ENCODE measurements at regions of chr19 and their contacts with region 1.

Region 1: GRCh38 chr19:49877020-49877878 is at the starts of genes AKT1S1 and TBC1D17:
- DNase-seq: peak; percentile 99
- H3K4me3 ChIP-seq: peak within 1 kb of the TSS; percentile 79
- H3K27ac ChIP-seq: peak within 1 kb of the TSS; percentile 92
- H3K4me1 ChIP-seq: peaks cover 21% of the 10 kb centered on the region
- H3K27me3 ChIP-seq: no peaks in the 10 kb centered on the region
- CTCF ChIP-seq: no peak
- total RNA-seq, gene AKT1S1: 109 and 143 TPM in 2 replicates
- total RNA-seq, gene TBC1D17: 52.1 and 62.3 TPM in 2 replicates

Region 2: DNA sequence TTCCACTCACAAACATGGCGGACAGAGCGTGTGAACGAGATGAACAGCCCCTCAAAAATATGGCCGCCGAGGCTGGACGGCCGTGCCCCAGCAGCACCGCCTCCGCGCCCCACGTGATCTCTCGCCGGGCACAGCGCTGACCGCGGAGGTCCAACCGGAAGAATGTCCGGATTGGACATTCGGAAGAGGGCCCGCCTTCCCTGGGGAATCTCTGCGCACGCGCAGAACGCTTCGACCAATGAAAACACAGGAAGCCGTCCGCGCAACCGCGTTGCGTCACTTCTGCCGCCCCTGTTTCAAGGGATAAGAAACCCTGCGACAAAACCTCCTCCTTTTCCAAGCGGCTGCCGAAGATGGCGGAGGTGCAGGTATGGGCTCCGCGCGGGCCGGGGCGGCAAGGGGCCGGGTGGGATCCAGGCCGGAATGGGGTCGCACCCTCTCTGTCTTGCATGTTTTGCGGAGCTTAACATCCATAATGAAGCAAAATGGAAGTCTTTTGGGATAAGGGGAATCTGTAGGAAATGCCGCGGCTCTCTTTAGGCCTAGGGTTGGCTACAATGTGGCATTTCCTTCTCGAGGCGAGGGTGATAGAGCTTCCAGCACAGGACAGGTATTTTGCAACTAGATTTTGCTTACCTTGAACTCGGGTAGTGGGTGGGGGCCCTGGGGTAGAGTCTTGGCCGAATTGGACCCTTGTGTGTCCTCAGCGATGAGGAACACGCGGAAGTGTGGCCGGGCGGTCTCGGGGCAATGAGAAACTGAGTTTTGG is 389.8 kb before region 1 on chr19 and contains the start of gene RPL13A:
- CTCF ChIA-PET with region 1: no interaction called
- POLR2A ChIA-PET with region 1: no interaction called
- intact Hi-C with region 1: loop called (anchors 2 kb)
- DNase-seq: peak; percentile 97 to 99
- H3K4me3 ChIP-seq: peak within 1 kb of the TSS; percentile 96
- H3K27ac ChIP-seq: peak within 1 kb of the TSS; percentile 91
- H3K4me1 ChIP-seq: peaks cover 18% of the 10 kb centered on the region
- H3K27me3 ChIP-seq: no peaks in the 10 kb centered on the region
- CTCF ChIP-seq: no peak
- total RNA-seq, gene RPL13A: 2,360 and 3,865 TPM in 2 replicates

Region 3: GRCh38 chr19:49590071-49590970 is 286.9 kb before region 1 on chr19:
- CTCF ChIA-PET with region 1: no interaction called
- POLR2A ChIA-PET with region 1: no interaction called
- intact Hi-C with region 1: loop called (anchors 2 kb)
- DNase-seq: peak; percentile 96 to 99
- H3K4me3 ChIP-seq: peak overlapping the region; percentile 89
- H3K27ac ChIP-seq: peak overlapping the region; percentile 71
- H3K4me1 ChIP-seq: peaks cover 9% of the 10 kb centered on the region; the same call in 1 of the 2 replicates
- H3K27me3 ChIP-seq: no peaks in the 10 kb centered on the region
- CTCF ChIP-seq: no peak; the same call in 1 of the 2 replicates

Region 4: GRCh38 chr19:49817964-49818648 is 59.1 kb before region 1 on chr19 and contains the start of gene MED25:
- CTCF ChIA-PET with region 1: no interaction called
- POLR2A ChIA-PET with region 1: no interaction called
- intact Hi-C with region 1: loop called (anchors 1 kb)
- DNase-seq: peak; percentile 69 to 89
- H3K4me3 ChIP-seq: peak within 1 kb of the TSS; percentile 84
- H3K27ac ChIP-seq: peak within 1 kb of the TSS; percentile 72
- H3K4me1 ChIP-seq: peaks cover 24% of the 10 kb centered on the region
- H3K27me3 ChIP-seq: no peaks in the 10 kb centered on the region
- CTCF ChIP-seq: no peak
- total RNA-seq, gene MED25: 92.2 and 99.6 TPM in 2 replicates

Region 5: GRCh38 chr19:50025024-50025789 is 148.0 kb after region 1 on chr19 and contains the start of gene VRK3:
- CTCF ChIA-PET with region 1: no interaction called
- POLR2A ChIA-PET with region 1: no interaction called
- intact Hi-C with region 1: loop called (anchors 5 kb)
- DNase-seq: peak; percentile 99
- H3K4me3 ChIP-seq: peak within 1 kb of the TSS; percentile 64
- H3K27ac ChIP-seq: peak within 1 kb of the TSS; percentile 27
- H3K4me1 ChIP-seq: peaks cover 27% of the 10 kb centered on the region
- H3K27me3 ChIP-seq: no peaks in the 10 kb centered on the region
- CTCF ChIP-seq: no peak; the same call in 1 of the 2 replicates
- total RNA-seq, gene VRK3: 53.3 and 62.5 TPM in 2 replicates

Measured in PC-9 (cell line).